Heart left ventricle (tissue), 16 donors: ENCODE measurements at regions of chr5 and their contacts with region 1.

Region 1: GRCh38 chr5:124649491-124650146 is 96.8 kb downstream of the ZNF608 start:
- DNase-seq: peak; percentile 76 to 86 (median 77)
- ATAC-seq: peak; percentile 19 to 66 (median 50)
- H3K4me3 ChIP-seq: peak overlapping the region in 8 of 12 donors; percentile 10 to 61 (median 41)
- H3K27ac ChIP-seq: peak overlapping the region; percentile 35 to 92 (median 83)
- H3K4me1 ChIP-seq: peaks cover 7 to 56% (median 46%) of the 10 kb centered on the region in 12 donors
- H3K27me3 ChIP-seq: peaks cover 0 to 57% (median 0%) of the 10 kb centered on the region in 9 donors
- CTCF ChIP-seq: no peak
- POLR2A ChIP-seq: no peak

Region 2: DNA sequence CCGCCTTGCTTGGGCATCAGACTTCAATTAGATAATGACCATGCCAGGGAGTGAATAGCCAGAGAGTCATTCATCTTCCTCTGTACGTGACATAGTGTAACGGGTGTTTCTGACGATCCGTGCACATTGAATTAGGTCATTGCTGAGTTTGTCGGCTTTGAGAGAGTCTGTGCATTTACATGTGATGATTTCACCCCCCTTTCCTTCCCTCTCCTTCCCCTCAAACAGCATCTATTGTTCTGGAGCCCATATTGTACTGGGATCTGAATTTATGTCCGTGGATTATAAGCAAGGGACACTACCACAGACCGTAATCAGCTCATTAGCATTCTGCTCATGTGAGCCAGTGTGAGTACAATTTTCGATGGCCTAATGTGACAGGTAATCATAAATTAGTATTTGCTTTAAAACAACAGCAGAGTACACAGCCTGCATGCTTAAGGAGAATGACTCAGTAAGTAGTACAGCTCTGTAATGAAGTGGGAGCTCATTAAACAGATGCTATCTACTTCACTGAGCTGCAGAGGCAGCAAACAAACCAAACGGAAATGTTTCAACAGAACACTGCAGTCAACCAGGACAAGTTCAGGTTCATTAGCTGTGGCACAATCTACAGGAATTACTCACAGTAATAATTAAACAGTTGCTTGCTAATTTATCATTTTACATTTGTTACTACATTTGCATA is 835.5 kb before region 1 on chr5:
- intact Hi-C with region 1: loop called in 1 of 10 experiments (anchors 5 kb)
- DNase-seq: no peak
- ATAC-seq: peak; percentile 45 to 65 (median 52)
- H3K4me3 ChIP-seq: peak overlapping the region in 1 of 12 donors; percentile 4
- H3K27ac ChIP-seq: peak overlapping the region in 11 of 12 donors; percentile 11 to 74 (median 33)
- H3K4me1 ChIP-seq: peaks cover 9 to 44% (median 30%) of the 10 kb centered on the region in 12 donors
- H3K27me3 ChIP-seq: no peaks in the 10 kb centered on the region
- CTCF ChIP-seq: no peak
- POLR2A ChIP-seq: no peak

Region 3: DNA sequence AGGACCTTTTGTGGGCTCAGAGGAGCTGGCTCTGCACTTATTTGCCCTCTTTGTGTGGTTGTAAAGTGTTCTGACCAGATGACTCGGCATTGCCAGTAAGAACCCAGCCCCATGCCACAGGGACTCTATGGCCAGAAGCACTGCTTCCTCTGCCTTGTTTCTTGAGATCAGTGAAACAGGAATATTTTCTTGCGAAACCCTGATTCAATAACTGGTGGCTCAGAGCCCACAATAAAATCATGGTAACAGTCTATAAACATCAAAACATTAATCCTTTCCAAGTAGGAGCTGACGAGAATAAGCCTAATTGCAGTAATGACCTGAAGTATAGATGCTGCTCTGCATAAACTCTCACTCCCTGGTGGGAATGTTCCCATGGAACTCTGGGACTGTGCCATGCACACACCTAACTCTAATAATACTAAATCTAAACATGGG is 247.5 kb before region 1 on chr5:
- intact Hi-C with region 1: loop called in 1 of 10 experiments (anchors 10 kb)
- DNase-seq: peak in 2 of 5 donors; percentile 40 to 45
- ATAC-seq: peak in 3 of 4 donors; percentile 36 to 88 (median 75)
- H3K4me3 ChIP-seq: no peak overlapping the region
- H3K27ac ChIP-seq: peak overlapping the region in 2 of 12 donors; percentile 15 to 56
- H3K4me1 ChIP-seq: peaks cover 0 to 32% (median 5%) of the 10 kb centered on the region in 12 donors
- H3K27me3 ChIP-seq: no peaks in the 10 kb centered on the region
- CTCF ChIP-seq: no peak
- POLR2A ChIP-seq: no peak

Region 4: DNA sequence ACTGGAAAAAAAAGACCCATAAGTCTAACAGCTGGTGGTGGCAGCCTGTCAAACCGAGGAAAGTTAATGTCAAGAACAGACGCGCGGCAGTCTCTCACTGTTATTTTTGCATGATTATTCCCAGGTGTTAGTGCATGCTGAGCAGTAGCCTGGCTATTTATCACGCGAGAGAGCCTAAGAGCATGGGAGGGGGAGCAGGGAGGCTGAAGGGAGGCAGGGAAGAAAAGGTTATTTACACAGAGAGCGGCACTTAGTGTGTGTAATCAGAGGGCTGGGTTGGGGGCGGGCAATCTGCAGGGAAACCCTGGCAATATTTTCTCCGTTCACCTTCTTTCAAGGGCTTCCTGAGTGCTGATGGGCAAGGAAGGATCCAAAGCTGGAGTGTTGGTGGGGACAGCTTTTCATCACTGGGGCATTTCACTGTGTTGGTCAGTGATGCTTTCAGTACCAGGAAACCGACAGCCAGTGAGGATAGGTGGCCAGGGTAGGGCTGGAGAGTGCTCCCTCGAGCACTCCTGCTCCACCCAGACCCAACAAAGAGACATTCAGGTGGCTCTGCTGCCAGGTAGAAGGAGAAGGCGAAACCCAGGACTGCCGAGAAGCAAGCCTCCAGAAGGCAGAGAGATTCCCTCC is 57.2 kb after region 1 on chr5:
- intact Hi-C with region 1: loop called in 3 of 10 experiments (anchors 5 kb)
- DNase-seq: peak in 4 of 5 donors; percentile 61 to 74 (median 66)
- ATAC-seq: peak; percentile 33 to 74 (median 70)
- H3K4me3 ChIP-seq: peak overlapping the region in 8 of 12 donors; percentile 2 to 26 (median 10)
- H3K27ac ChIP-seq: peak overlapping the region in 7 of 12 donors; percentile 11 to 53 (median 35)
- H3K4me1 ChIP-seq: peaks cover 6 to 78% (median 51%) of the 10 kb centered on the region in 12 donors
- H3K27me3 ChIP-seq: no peaks in the 10 kb centered on the region
- CTCF ChIP-seq: no peak
- POLR2A ChIP-seq: no peak

Region 5: DNA sequence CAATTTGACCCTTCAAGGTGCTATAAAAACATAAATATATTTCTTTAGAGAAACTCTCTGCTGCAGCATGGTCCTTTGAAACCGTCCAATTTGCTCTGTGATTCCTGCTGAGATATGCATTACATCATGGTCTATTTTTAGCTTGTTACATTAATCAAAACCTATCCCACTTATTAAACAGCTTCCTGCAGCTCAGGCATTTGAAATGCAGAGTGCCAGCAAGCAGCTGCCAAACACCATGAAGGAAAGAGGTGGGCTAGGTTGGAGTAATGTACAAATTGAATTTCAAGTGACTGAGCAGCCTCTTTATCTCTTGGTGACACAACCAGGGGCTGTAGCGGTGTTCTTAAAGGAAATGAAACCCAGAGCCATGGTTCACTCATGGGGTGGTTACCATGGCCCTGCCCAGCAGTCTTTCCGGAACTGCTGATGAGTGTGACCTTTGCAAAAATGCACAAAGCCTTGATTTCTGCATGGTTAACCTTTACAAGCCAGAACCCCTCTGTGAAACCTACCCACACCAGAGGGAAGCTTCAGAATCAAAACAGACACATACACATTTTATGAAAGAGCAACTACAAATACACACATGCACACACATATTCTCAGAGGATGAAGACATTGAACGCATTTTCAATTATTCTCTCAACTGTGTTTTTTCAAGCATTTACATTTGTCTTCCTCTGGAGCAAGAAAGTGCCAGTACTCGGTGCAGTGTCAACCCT is 252.6 kb after region 1 on chr5:
- intact Hi-C with region 1: loop called in 5 of 10 experiments (anchors 5 to 10 kb)
- DNase-seq: no peak
- ATAC-seq: peak in 3 of 4 donors; percentile 21 to 57 (median 26)
- H3K4me3 ChIP-seq: no peak overlapping the region
- H3K27ac ChIP-seq: no peak overlapping the region
- H3K4me1 ChIP-seq: peaks cover 12 to 35% (median 31%) of the 10 kb centered on the region in 12 donors
- H3K27me3 ChIP-seq: no peaks in the 10 kb centered on the region
- CTCF ChIP-seq: no peak
- POLR2A ChIP-seq: no peak

Region 6: DNA sequence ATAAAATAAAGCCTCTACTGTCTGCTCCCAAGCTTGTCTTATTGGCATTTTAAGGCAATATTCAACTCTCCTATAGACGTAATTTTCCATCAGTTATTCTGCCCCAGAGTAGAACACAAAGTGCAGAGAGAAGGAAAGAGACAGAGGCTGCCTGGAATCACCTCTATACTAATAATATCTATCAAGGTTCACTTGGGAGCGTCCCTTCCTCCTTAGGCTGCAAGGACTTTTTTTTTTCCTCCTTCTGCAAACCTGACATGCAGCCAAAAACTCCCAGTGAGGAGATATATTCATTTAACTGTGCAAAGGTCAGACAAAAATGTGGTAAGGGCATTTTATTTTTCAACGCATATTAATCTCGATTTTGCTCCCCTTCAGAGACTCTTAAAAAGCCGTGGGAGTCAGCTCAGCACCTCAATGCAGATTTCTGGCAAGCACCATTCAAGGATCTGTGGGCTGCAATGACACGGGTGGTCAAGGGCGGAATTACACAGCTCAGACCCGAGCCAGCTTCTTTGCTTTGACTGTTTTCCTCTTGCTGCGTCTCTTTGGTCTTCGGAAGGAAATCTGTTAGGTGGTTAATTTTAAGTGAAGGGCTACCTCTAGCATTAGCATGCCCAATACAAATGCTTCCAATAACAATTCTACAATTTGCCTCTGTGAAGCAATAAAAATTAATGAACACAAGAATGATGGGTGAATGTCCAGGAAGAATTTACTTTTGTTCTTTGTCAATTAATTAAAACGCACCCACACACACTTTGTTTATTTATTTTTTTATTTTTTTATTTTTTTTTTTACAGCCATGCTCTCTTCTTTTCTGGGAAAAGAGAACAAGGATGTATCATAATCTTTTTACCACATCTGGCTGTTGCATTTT is 1185.9 kb after region 1 on chr5:
- intact Hi-C with region 1: loop called in 1 of 10 experiments (anchors 10 kb)
- DNase-seq: peak in 4 of 5 donors; percentile 16 to 38 (median 30)
- ATAC-seq: peak in 3 of 4 donors; percentile 74 to 86 (median 77)
- H3K4me3 ChIP-seq: peak overlapping the region in 4 of 12 donors; percentile 10 to 20 (median 16)
- H3K27ac ChIP-seq: no peak overlapping the region
- H3K4me1 ChIP-seq: peaks cover 0 to 8% (median 4%) of the 10 kb centered on the region in 12 donors
- H3K27me3 ChIP-seq: no peaks in the 10 kb centered on the region
- CTCF ChIP-seq: peak; percentile 42 to 84 (median 70)
- POLR2A ChIP-seq: no peak